Activated CD4-positive, alpha-beta T cell treated with anti-CD3 and anti-CD28 coated beads for 36 hours (primary cell): ENCODE measurements at regions of chr15 and their contacts with region 1.

Region 1: GRCh38 chr15:70545526-70545925 is 217.8 kb downstream of the UACA start:
- DNase-seq: no peak
- ATAC-seq: no peak
- H3K4me3 Mint-ChIP-seq: no peak overlapping the region
- H3K27ac Mint-ChIP-seq: peak overlapping the region; percentile 84
- H3K4me1 Mint-ChIP-seq: peaks cover 51% of the 10 kb centered on the region
- H3K27me3 Mint-ChIP-seq: no peaks in the 10 kb centered on the region

Region 2: GRCh38 chr15:69760890-69761568 is 784.5 kb before region 1 on chr15:
- CTCF ChIA-PET with region 1: no interaction called
- POLR2A ChIA-PET with region 1: interaction called, 10 read pairs
- intact Hi-C with region 1: loop called in 1 of 2 experiments (anchors 2 kb)
- DNase-seq: peak; percentile 89
- ATAC-seq: peak; percentile 42
- H3K4me3 Mint-ChIP-seq: peak overlapping the region; percentile 25
- H3K27ac Mint-ChIP-seq: peak overlapping the region; percentile 94
- H3K4me1 Mint-ChIP-seq: peaks cover 72% of the 10 kb centered on the region
- H3K27me3 Mint-ChIP-seq: no peaks in the 10 kb centered on the region

Region 3: GRCh38 chr15:70504299-70504951 is 41.1 kb before region 1 on chr15:
- CTCF ChIA-PET with region 1: no interaction called
- POLR2A ChIA-PET with region 1: no interaction called
- intact Hi-C with region 1: loop called (anchors 1 to 5 kb)
- DNase-seq: peak; percentile 76
- ATAC-seq: peak; percentile 31
- H3K4me3 Mint-ChIP-seq: no peak overlapping the region
- H3K27ac Mint-ChIP-seq: peak overlapping the region; percentile 79
- H3K4me1 Mint-ChIP-seq: peaks cover 77% of the 10 kb centered on the region
- H3K27me3 Mint-ChIP-seq: peaks cover 2% of the 10 kb centered on the region

Region 4: DNA sequence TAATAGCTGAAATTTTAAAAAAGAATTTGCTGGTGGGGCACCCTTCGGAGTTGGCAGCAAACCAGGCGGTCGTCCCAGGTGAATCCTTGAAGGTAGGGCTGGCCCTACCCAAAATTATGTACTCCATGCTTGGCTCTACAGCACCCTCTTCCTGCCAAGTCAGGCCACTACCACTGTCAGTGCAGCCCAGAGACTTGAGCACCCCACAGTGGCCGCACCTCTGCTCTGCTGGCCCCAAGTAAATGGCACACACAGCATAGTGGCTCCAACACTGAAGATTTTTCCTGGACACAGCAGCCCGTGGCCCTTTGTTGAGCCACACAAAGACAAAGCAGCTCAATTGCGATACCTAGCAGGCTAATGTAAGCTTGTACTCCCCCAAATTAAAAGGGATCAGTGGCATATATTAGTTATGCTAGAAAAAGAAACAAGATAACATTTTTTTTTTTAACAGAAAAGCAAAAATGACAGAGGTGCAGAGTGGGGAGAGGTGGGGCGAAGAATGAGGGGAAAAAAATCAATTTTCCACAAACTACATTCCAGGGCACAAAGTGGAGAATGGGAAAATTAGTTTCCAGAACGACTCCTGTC is 32.7 kb before region 1 on chr15:
- CTCF ChIA-PET with region 1: no interaction called
- POLR2A ChIA-PET with region 1: no interaction called
- intact Hi-C with region 1: loop called (anchors 1 to 5 kb)
- DNase-seq: peak; percentile 89
- ATAC-seq: peak; percentile 88
- H3K4me3 Mint-ChIP-seq: no peak overlapping the region
- H3K27ac Mint-ChIP-seq: no peak overlapping the region
- H3K4me1 Mint-ChIP-seq: peaks cover 25% of the 10 kb centered on the region
- H3K27me3 Mint-ChIP-seq: peaks cover 2% of the 10 kb centered on the region

Region 5: DNA sequence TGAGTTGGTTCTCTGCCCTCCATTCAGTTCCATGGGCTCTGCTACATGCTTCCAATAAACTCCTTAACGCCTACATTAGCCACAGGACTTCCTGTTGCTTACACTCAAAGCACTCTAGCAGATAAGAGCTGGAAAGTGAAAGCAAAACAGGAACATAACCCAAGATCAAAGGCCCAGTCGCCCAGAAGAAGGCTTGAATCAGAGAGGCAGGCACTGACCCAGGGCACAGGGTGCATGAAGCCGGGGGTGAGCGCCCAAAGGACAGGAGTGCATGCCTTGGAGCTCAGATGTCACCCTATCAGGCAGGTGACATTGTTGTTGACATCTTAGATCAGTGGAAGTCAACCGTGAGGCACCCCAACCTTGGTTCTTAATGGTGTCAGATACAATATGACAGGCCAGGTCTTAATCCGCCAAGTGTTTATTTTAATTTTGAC is 17.2 kb before region 1 on chr15:
- CTCF ChIA-PET with region 1: interaction called, 3 read pairs
- POLR2A ChIA-PET with region 1: no interaction called
- intact Hi-C with region 1: loop called (anchors 1 to 2 kb)
- DNase-seq: peak; percentile 80
- ATAC-seq: peak; percentile 97
- H3K4me3 Mint-ChIP-seq: peak overlapping the region; percentile 62
- H3K27ac Mint-ChIP-seq: peak overlapping the region; percentile 88
- H3K4me1 Mint-ChIP-seq: peaks cover 62% of the 10 kb centered on the region
- H3K27me3 Mint-ChIP-seq: no peaks in the 10 kb centered on the region

Region 6: DNA sequence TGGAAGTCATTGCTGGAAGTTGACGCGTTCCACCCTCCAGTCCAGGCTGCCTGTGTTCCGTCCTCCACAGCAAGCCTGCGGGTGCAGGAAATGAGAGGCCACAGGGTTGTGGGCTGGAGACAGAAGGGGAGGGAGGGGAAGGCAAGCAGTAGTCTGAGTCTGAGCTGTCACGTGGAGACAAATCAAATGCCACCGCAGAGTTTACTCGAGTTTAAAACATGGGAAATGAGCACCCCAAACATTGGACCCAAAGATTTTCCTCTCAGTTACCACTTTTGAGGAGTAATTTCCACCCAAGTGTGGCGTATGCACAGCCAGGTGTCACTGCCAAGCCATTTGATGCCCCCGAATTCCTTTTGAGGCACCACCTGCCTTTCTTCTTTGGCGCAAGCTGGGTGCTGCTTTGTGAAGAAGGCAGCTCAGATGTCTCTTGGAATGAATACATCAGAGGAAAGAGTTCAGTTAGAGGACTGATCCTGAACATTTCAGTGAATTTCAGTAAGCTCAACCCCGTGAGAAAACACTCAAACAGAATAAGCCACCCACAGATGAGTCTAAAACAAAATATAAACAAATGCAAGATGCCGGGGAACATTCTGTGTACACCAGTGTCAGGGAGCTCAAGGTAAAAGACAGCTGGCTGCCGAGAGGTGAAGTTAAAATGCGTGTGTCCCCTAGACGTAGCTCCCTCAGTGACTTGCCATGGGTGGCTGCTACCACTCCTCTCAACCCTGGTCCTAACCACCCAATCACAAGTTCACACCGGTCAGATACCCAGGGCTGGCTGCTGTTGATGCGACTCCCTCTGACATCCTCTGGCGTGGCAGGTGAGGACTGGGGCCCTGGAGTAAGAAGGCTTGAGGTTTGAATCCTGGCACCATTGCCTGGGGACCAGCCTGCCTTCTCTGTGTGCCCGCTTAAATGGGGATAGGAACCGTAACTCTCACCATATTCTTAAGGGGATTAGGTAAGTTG is 14.0 kb after region 1 on chr15:
- CTCF ChIA-PET with region 1: interaction called, 5 read pairs
- POLR2A ChIA-PET with region 1: interaction called, 4 read pairs
- intact Hi-C with region 1: loop called in 1 of 2 experiments (anchors 1 kb)
- DNase-seq: peak; percentile 86
- ATAC-seq: peak; percentile 85
- H3K4me3 Mint-ChIP-seq: no peak overlapping the region
- H3K27ac Mint-ChIP-seq: no peak overlapping the region
- H3K4me1 Mint-ChIP-seq: peaks cover 14% of the 10 kb centered on the region
- H3K27me3 Mint-ChIP-seq: no peaks in the 10 kb centered on the region

Region 7: DNA sequence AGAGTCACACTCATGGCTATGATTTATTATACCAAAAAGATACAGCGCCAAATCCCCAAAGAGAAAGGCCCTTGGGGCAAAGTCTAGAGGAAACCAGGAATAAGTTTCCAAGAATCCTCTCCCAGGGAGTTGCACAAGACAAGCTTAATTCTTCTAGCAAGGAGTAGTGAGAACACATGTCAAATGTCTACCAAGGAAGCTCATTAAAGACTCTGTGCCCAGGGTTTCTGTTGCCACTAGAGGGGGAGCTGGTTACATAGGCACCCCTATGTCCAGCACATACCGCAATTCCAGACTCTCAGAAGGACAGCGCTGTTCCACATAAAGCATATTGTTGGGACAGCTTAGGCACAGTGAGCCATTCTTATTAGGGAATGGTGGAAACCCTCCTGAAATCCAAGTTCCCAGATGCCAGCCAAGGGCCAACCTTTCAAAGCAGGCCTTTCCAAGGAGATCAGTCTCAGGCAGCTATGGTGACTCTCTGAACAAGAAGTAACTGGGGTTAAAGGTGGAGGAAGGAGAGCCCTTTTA is 23.6 kb after region 1 on chr15:
- CTCF ChIA-PET with region 1: no interaction called
- POLR2A ChIA-PET with region 1: no interaction called
- intact Hi-C with region 1: loop called in 1 of 2 experiments (anchors 1 kb)
- DNase-seq: no peak
- ATAC-seq: no peak
- H3K4me3 Mint-ChIP-seq: no peak overlapping the region
- H3K27ac Mint-ChIP-seq: no peak overlapping the region
- H3K4me1 Mint-ChIP-seq: peaks cover 15% of the 10 kb centered on the region
- H3K27me3 Mint-ChIP-seq: no peaks in the 10 kb centered on the region